PC-3 (cell line): ENCODE measurements at regions of chr2 and their contacts with region 1.

Region 1: GRCh38 chr2:147910990-147911473 is 66.2 kb downstream of the ACVR2A start:
- DNase-seq: peak; percentile 84
- ATAC-seq: peak; percentile 37
- H3K4me3 ChIP-seq: no peak overlapping the region
- H3K27ac ChIP-seq: no peak overlapping the region
- H3K4me1 ChIP-seq: peaks cover 7% of the 10 kb centered on the region
- H3K27me3 ChIP-seq: no peaks in the 10 kb centered on the region
- CTCF ChIP-seq: peak; percentile 84

Region 2: DNA sequence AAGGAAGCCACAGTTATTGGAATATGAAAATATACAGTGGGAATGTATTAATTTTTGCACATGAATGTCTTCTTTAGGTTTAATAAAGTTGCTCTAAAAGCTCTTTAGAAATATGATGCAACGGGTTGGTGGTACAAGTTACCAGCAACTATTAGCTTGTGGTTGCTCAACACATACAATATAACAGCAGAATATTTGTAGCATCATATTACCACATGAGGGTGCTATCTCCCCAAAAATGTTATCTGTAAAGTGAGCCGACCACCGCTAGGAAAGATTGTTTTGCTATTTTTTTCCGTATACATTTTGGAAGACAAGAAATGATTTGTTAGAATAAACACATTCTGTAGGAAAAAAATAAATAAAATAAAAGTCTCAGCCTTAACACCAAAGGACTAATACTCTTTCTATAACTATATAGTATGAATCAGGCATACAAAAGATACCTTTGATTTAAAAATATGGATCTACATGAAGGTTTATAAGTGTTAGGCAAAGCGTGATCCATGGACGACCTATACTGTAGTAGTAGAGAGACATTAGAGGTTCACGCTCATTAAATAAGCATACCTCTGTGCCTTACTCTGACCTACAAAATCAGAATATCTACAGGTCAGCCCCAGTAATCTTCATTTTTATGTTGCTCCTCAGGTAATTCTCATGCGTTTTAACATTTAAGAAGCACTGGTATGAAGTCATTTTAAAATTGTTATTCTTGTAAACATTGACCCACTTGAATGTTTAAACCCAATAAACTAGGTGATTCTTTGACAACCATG is 1176.8 kb before region 1 on chr2:
- CTCF ChIA-PET with region 1: interaction called, 7 read pairs
- POLR2A ChIA-PET with region 1: no interaction called
- intact Hi-C with region 1: loop called (anchors 1 kb)
- DNase-seq: peak; percentile 84
- ATAC-seq: peak; percentile 87
- H3K4me3 ChIP-seq: peak overlapping the region; percentile 22; the same call in 1 of the 2 replicates
- H3K27ac ChIP-seq: no peak overlapping the region
- H3K4me1 ChIP-seq: peaks cover 4% of the 10 kb centered on the region; the same call in 1 of the 2 replicates
- H3K27me3 ChIP-seq: no peaks in the 10 kb centered on the region
- CTCF ChIP-seq: peak; percentile 86

Region 3: DNA sequence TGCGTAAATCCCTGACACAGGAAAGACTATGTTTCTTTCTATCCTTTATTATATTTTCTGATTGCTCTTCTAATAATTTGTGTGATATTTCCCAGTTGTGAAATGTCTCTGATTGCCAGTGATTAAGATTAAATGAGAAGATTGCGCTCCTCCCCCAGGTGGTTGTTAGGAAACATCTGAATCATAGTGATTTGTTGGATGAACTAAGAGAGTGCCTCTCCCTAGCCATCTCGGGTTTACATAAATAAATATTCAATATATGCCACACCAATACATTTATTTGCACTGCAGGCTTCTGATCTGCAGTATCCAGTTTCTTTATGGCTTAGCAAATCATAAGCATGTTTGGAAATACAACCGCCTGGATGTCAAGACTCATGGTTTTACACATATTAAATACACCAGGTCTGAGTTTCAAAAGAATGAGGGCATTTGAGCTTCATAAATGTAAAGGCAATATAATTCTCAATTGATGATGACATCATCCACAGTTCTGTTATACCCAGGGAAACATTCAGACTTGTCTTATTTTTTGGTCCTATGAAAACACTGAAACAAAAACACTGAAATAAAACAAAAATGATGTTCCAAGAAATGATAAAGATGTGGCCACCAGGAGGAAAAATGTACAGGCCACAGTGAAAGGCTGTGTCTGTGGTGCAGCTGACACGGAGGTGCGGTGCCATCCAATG is 892.9 kb before region 1 on chr2:
- CTCF ChIA-PET with region 1: no interaction called
- POLR2A ChIA-PET with region 1: interaction called, 17 read pairs
- intact Hi-C with region 1: no loop called
- DNase-seq: no peak
- ATAC-seq: no peak
- H3K4me3 ChIP-seq: no peak overlapping the region
- H3K27ac ChIP-seq: no peak overlapping the region
- H3K4me1 ChIP-seq: no peaks in the 10 kb centered on the region
- H3K27me3 ChIP-seq: no peaks in the 10 kb centered on the region
- CTCF ChIP-seq: no peak

Region 4: DNA sequence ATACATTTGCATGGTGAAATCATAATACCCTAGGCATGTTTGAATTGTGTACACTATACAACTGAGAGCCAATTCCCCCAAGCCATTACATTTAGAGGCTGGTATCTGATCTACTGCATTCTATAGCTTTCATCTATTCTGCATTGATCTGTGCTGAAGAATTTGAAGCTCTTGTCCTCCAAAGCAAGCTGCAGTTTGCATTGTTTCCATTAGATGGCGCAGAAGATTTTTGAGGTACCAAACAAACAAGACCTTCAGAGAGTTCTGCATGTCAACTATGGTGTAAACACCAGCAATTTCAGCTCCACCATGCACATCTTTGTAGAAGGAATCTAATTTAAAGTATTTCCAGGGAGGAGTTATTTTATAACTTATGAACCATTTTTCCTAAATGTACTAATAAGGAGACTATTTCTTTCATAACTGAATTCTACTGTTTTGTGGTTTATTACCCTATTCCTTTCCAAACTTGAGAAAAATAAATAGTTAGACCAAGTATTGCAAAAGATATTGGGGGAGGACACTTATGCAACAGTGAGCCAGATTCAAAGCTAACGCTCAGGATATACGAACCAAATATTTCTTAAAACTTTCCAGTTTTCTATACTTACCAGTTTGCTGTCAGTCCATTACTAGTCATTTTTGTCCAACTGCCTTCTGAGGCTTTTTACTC is 828.0 kb before region 1 on chr2:
- CTCF ChIA-PET with region 1: interaction called, 9 read pairs
- POLR2A ChIA-PET with region 1: no interaction called
- intact Hi-C with region 1: loop called (anchors 1 kb)
- DNase-seq: peak; percentile 87
- ATAC-seq: peak; percentile 67
- H3K4me3 ChIP-seq: no peak overlapping the region
- H3K27ac ChIP-seq: no peak overlapping the region
- H3K4me1 ChIP-seq: no peaks in the 10 kb centered on the region
- H3K27me3 ChIP-seq: no peaks in the 10 kb centered on the region
- CTCF ChIP-seq: peak; percentile 96

Region 5: GRCh38 chr2:147331790-147332419 is 579.1 kb before region 1 on chr2:
- CTCF ChIA-PET with region 1: interaction called, 9 read pairs
- POLR2A ChIA-PET with region 1: no interaction called
- intact Hi-C with region 1: loop called (anchors 5 kb)
- DNase-seq: peak; percentile 79
- ATAC-seq: peak; percentile 67
- H3K4me3 ChIP-seq: no peak overlapping the region
- H3K27ac ChIP-seq: no peak overlapping the region
- H3K4me1 ChIP-seq: no peaks in the 10 kb centered on the region
- H3K27me3 ChIP-seq: no peaks in the 10 kb centered on the region
- CTCF ChIP-seq: peak; percentile 89

Region 6: DNA sequence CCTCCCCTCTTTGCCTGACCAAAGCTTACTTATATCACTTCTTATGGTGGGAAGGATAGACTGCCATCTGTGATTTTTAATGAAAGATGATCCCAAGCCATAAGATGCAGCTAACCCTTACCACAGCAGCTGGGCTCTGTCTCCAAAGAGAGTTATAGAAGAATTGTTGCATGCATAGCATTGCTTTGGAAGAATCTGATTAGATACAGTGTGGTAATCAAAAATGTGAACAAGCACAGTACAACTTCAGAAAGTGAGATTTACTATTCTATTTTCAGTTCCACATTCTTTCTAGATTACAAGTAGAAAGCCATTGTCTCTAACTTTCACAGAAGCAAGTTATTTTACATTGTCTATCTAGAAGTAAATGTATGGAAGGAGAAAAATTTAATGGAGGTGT is 195.2 kb before region 1 on chr2:
- CTCF ChIA-PET with region 1: no interaction called
- POLR2A ChIA-PET with region 1: no interaction called
- intact Hi-C with region 1: loop called (anchors 5 kb)
- DNase-seq: no peak
- ATAC-seq: no peak
- H3K4me3 ChIP-seq: no peak overlapping the region
- H3K27ac ChIP-seq: no peak overlapping the region
- H3K4me1 ChIP-seq: peaks cover 21% of the 10 kb centered on the region
- H3K27me3 ChIP-seq: no peaks in the 10 kb centered on the region
- CTCF ChIP-seq: no peak